ENCODE measurements at regions of chr7 and their contacts with region 1.

Region 1: GRCh38 chr7:128209229-128210035 is 31.6 kb upstream of the LEP start:
- DNase-seq: peak; percentile 53 to 74 (median 59)
- ATAC-seq: peak; percentile 76 to 84 (median 82)
- H3K4me3 ChIP-seq: no peak overlapping the region
- H3K27ac ChIP-seq: no peak overlapping the region
- H3K4me1 ChIP-seq: peaks cover 0 to 2% (median 0%) of the 10 kb centered on the region in 12 donors
- H3K27me3 ChIP-seq: peaks cover 0 to 62% (median 17%) of the 10 kb centered on the region in 9 donors
- CTCF ChIP-seq: peak; percentile 96 to 99 (median 97)
- POLR2A ChIP-seq: no peak

Region 2: GRCh38 chr7:126803060-126803665 is 1406.3 kb before region 1 on chr7:
- intact Hi-C with region 1: loop called in 1 of 10 experiments (anchors 10 kb)
- DNase-seq: no peak
- ATAC-seq: peak in 1 of 4 donors; percentile 34
- H3K4me3 ChIP-seq: no peak overlapping the region
- H3K27ac ChIP-seq: no peak overlapping the region
- H3K4me1 ChIP-seq: no peaks in the 10 kb centered on the region
- H3K27me3 ChIP-seq: peaks cover 0 to 8% (median 0%) of the 10 kb centered on the region in 9 donors
- CTCF ChIP-seq: peak; percentile 28 to 64 (median 48)
- POLR2A ChIP-seq: no peak

Region 3: DNA sequence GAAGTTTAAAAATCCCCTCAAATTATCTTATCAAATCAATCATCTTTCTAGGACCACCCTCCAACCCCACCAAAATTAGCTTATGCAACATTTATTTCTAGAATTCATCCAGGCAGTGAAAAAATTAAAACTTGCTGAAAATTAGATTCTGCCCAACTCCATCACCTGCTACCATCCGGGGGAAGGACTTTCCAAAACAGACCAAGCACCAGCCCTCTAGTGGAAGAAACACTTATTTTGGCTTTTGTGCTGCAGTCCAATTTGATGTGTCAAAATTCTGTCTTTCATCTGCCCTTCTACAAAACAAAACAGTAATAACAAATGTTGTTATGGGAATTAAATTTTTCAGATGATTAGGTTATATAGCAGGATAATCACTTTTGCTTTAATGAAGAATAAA is 659.2 kb before region 1 on chr7:
- intact Hi-C with region 1: loop called in 2 of 10 experiments (anchors 10 kb)
- DNase-seq: no peak
- ATAC-seq: no peak
- H3K4me3 ChIP-seq: no peak overlapping the region
- H3K27ac ChIP-seq: no peak overlapping the region
- H3K4me1 ChIP-seq: no peaks in the 10 kb centered on the region
- H3K27me3 ChIP-seq: no peaks in the 10 kb centered on the region
- CTCF ChIP-seq: no peak
- POLR2A ChIP-seq: no peak

Region 4: DNA sequence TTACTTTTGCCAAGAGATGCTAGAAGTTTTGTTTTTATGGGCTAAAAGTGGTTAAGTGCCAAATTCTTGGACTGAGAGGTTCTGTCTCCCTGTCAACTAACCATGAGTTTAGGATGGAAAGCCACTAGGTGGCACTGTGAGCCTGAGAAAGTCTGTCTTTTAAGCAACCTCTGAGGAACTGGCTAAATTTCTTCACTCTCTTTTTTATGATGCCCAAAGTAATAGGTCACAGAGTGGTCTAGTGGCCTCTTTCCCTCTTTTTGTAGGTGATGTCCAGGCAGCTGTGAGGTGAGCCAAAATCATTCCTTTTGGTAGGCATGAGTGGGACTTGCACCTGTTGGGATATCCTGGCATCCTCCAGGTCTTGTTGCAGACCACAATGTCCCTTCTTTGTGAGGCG is 500.6 kb before region 1 on chr7:
- intact Hi-C with region 1: loop called (anchors 1 to 2 kb)
- DNase-seq: peak in 4 of 5 donors; percentile 57 to 73 (median 70)
- ATAC-seq: peak; percentile 27 to 86 (median 84)
- H3K4me3 ChIP-seq: no peak overlapping the region
- H3K27ac ChIP-seq: no peak overlapping the region
- H3K4me1 ChIP-seq: peaks cover 0 to 7% (median 0%) of the 10 kb centered on the region in 12 donors
- H3K27me3 ChIP-seq: no peaks in the 10 kb centered on the region
- CTCF ChIP-seq: peak; percentile 52 to 90 (median 80)
- POLR2A ChIP-seq: no peak

Region 5: DNA sequence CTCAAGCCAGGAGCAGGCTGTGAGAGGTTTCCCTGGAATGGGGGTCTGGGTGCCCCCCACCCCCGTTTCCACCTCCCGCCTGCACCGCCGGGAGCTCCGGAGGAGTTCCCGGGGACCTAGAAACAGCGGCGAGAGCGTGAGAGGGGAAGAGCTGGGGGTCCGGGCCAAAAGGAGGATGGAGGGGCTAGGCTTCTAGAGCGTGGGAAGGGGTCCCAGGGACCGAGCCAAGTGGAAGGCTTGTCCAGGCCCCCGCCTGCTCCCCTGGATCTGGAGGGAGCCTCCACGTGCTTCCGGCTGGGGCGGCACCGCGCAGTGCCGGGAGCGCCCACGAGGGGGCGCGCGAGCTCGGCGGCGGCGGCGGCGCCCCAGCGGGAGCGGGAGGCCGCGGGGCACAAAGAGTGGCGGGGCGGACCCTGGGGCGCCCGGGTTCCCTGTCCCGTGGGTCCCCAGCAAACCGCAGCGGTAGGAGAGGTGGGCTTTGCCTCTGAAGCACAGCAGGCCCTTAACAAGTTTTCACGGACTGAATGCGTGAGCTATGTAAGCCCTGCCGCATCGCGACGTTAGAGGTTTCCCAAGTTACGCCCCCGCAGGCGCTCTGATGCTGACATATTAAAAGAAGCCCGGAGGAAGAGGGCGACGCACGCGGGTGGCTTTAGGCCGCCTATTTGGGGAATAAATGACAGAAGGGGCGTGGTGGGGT is 73.8 kb before region 1 on chr7:
- intact Hi-C with region 1: loop called (anchors 1 to 5 kb)
- DNase-seq: peak; percentile 31 to 73 (median 51)
- ATAC-seq: peak in 3 of 4 donors; percentile 88 to 97 (median 94)
- H3K4me3 ChIP-seq: peak overlapping the region; percentile 28 to 85 (median 54)
- H3K27ac ChIP-seq: no peak overlapping the region
- H3K4me1 ChIP-seq: peaks cover 0 to 33% (median 11%) of the 10 kb centered on the region in 12 donors
- H3K27me3 ChIP-seq: peaks cover 0 to 53% (median 29%) of the 10 kb centered on the region in 9 donors
- CTCF ChIP-seq: peak; percentile 53 to 99 (median 92)
- POLR2A ChIP-seq: no peak